Activated CD4-positive, alpha-beta T cell treated with anti-CD3 and anti-CD28 coated beads for 36 hours (primary cell): ENCODE measurements at regions of chr5 and their contacts with region 1.

Region 1: GRCh38 chr5:136115183-136115865 is 17.3 kb upstream of the SMAD5 start:
- DNase-seq: no peak
- ATAC-seq: peak; percentile 61
- H3K4me3 Mint-ChIP-seq: no peak overlapping the region
- H3K27ac Mint-ChIP-seq: no peak overlapping the region
- H3K4me1 Mint-ChIP-seq: no peaks in the 10 kb centered on the region
- H3K27me3 Mint-ChIP-seq: peaks cover 10% of the 10 kb centered on the region

Region 2: GRCh38 chr5:136104306-136104965 is 10.9 kb before region 1 on chr5:
- CTCF ChIA-PET with region 1: interaction called, 10 read pairs
- POLR2A ChIA-PET with region 1: no interaction called
- intact Hi-C with region 1: no loop called
- DNase-seq: no peak
- ATAC-seq: no peak
- H3K4me3 Mint-ChIP-seq: no peak overlapping the region
- H3K27ac Mint-ChIP-seq: no peak overlapping the region
- H3K4me1 Mint-ChIP-seq: no peaks in the 10 kb centered on the region
- H3K27me3 Mint-ChIP-seq: peaks cover 7% of the 10 kb centered on the region

Region 3: DNA sequence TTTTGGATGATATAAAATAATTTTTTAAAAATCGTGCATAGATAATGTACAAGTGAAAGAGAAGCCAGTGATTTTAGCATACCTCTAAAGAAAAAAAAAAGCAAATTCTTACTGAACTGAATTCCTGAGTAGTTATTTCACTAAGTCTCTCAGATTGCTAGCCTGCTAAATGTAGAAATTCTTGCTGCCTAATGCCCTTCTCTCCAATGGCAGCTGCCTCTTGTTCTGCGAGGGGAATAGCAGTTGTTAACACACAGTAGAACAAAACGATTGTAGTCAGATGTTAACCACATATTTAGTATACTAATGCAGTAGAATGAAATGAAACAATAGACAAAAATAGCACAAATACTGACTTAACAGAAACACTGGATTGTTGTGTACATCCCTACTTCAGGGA is 44.1 kb after region 1 on chr5:
- CTCF ChIA-PET with region 1: no interaction called
- POLR2A ChIA-PET with region 1: no interaction called
- intact Hi-C with region 1: no loop called
- DNase-seq: no peak
- ATAC-seq: no peak
- H3K4me3 Mint-ChIP-seq: no peak overlapping the region
- H3K27ac Mint-ChIP-seq: no peak overlapping the region
- H3K4me1 Mint-ChIP-seq: no peaks in the 10 kb centered on the region
- H3K27me3 Mint-ChIP-seq: no peaks in the 10 kb centered on the region

Region 4: GRCh38 chr5:136258463-136258862 is 143.1 kb after region 1 on chr5:
- CTCF ChIA-PET with region 1: no interaction called
- POLR2A ChIA-PET with region 1: no interaction called
- intact Hi-C with region 1: no loop called
- DNase-seq: no peak
- ATAC-seq: no peak
- H3K4me3 Mint-ChIP-seq: no peak overlapping the region
- H3K27ac Mint-ChIP-seq: no peak overlapping the region
- H3K4me1 Mint-ChIP-seq: no peaks in the 10 kb centered on the region
- H3K27me3 Mint-ChIP-seq: peaks cover 20% of the 10 kb centered on the region